A549 (cell line): ENCODE measurements at regions of chr18 and their contacts with region 1.

Region 1: GRCh38 chr18:37322492-37323035 is 243.0 kb downstream of the CELF4 start:
- DNase-seq: peak; percentile 17 to 19
- ATAC-seq: peak; percentile 85 to 93
- H3K4me3 ChIP-seq: no peak overlapping the region
- H3K27ac ChIP-seq: no peak overlapping the region
- H3K4me1 ChIP-seq: no peaks in the 10 kb centered on the region
- CTCF ChIP-seq: peak; percentile 49
- EP300 ChIP-seq: no peak
- POLR2A ChIP-seq: no peak
- RAD21 ChIP-seq: peak; percentile 37 to 66; a peak in 4 of 5 replicates

Region 2: DNA sequence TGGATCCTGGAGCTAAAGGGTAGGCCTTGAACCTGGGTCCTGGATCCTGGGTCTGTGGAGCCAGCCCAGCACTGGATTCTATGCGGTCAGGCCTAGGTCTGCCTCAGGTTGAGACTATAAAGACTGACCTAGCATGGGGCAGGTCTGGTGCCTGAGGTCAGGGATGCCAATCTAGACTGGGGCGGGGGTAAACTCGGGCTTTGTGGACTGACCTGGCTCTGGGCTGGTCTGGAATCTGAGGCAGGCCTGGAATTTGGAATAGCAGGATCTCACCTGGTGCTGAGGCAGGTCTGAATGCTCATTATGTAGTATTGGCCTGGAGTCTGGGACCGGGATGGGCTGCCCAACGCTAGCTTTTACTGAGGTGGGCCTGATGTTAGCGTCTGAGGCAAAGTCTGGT is 237.7 kb before region 1 on chr18:
- CTCF ChIA-PET with region 1: no interaction called
- POLR2A ChIA-PET with region 1: no interaction called
- DNase-seq: no peak
- ATAC-seq: no peak
- H3K4me3 ChIP-seq: no peak overlapping the region
- H3K27ac ChIP-seq: no peak overlapping the region
- H3K4me1 ChIP-seq: no peaks in the 10 kb centered on the region
- CTCF ChIP-seq: no peak
- EP300 ChIP-seq: no peak
- POLR2A ChIP-seq: no peak
- RAD21 ChIP-seq: no peak

Region 3: GRCh38 chr18:37124516-37124915 is 198.0 kb before region 1 on chr18:
- CTCF ChIA-PET with region 1: no interaction called
- POLR2A ChIA-PET with region 1: no interaction called
- DNase-seq: no peak
- ATAC-seq: no peak
- H3K4me3 ChIP-seq: no peak overlapping the region
- H3K27ac ChIP-seq: no peak overlapping the region
- H3K4me1 ChIP-seq: no peaks in the 10 kb centered on the region
- CTCF ChIP-seq: no peak
- EP300 ChIP-seq: no peak
- POLR2A ChIP-seq: no peak
- RAD21 ChIP-seq: no peak

Region 4: DNA sequence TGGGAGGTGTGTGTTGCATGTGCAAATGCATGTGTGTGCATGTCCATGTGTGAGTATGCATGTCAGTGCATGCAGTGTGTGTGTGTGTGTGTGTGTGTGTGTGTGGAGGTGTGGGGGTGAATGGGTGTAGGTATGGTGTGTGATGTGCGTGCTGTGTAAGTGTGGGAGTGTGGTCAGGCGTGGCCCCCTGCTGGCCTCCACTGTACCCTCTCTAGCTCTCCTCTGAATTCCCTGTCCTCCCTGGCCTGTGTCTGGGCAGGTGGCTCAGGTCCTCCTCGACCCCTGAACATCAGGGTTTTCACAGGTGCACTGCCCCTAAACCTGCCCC is 12.8 kb after region 1 on chr18:
- CTCF ChIA-PET with region 1: interaction called, 27 read pairs
- POLR2A ChIA-PET with region 1: no interaction called
- DNase-seq: peak in 1 of 2 experiments; percentile 9
- ATAC-seq: peak; percentile 75 to 85; a peak in 5 of 6 replicates
- H3K4me3 ChIP-seq: no peak overlapping the region
- H3K27ac ChIP-seq: no peak overlapping the region
- H3K4me1 ChIP-seq: no peaks in the 10 kb centered on the region
- CTCF ChIP-seq: peak; percentile 9; the same call in 1 of the 3 replicates
- EP300 ChIP-seq: no peak
- POLR2A ChIP-seq: no peak
- RAD21 ChIP-seq: peak; percentile 22 to 30; a peak in 1 of 5 replicates